Activated T-helper 2 cell treated with anti-CD3 and anti-CD28 coated beads, Interferon-gamma antibody, Interleukin-2, Interleukin-4, amounts not matched to agents 10 μg/mL and 5 μg/mL and 100 μg/mL, durations not matched to agents 14 hours and 24 hours and 36 hours (primary cell): ENCODE measurements at regions of chr7 and their contacts with region 1.

Region 1: GRCh38 chr7:23373151-23374004 is 74.2 kb downstream of the MALSU1 start:
- DNase-seq: peak; percentile 28
- H3K4me3 Mint-ChIP-seq: no peak overlapping the region
- H3K27ac Mint-ChIP-seq: peak overlapping the region; percentile 83
- H3K4me1 Mint-ChIP-seq: peaks cover 57% of the 10 kb centered on the region
- H3K27me3 Mint-ChIP-seq: no peaks in the 10 kb centered on the region

Region 2: GRCh38 chr7:23273141-23273599 is 100.2 kb before region 1 on chr7:
- intact Hi-C with region 1: no loop called
- DNase-seq: peak; percentile 84
- H3K4me3 Mint-ChIP-seq: peak overlapping the region; percentile 55
- H3K27ac Mint-ChIP-seq: peak overlapping the region; percentile 21
- H3K4me1 Mint-ChIP-seq: peaks cover 20% of the 10 kb centered on the region
- H3K27me3 Mint-ChIP-seq: peaks cover 3% of the 10 kb centered on the region

Region 3: DNA sequence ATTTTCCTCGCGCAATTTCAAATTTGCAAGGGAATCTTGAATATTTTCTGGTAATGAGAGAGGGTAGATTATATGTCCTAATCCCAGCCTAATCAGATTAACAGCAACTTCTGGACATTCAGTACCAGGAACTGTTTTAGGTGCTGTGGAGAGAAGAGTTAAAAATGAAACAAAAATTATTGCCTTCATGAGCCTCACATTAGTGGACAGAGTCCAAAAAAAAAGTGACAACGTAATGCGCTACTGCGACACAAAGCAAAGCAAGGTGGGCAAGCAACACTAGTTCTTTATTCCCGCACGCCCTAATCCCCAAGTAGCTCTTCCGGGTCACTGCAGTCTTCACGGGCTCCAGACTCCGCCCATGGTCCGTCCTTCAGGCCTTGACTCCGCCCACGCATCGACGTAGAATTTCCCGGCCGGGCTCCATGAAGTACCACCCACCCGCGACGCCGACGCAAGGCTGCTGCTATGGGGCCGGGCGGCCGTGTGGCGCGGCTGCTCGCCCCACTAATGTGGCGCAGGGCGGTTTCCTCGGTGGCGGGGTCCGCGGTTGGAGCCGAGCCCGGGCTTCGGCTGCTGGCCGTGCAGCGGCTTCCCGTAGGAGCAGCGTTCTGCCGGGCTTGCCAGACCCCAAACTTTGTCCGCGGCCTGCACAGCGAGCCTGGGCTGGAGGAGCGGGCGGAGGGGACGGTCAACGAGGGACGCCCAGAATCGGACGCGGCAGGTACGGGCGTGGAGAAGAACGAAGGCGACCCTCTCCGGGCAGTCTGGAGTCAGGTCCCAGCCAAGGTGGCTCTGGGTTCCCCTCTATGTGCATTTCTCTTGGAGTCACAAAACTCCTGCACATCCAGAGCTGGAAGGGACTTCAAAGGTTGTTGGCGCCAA is 74.3 kb before region 1 on chr7 and contains the start of gene MALSU1:
- intact Hi-C with region 1: loop called (anchors 2 kb)
- DNase-seq: peak; percentile 93
- H3K4me3 Mint-ChIP-seq: peak within 1 kb of the TSS; percentile 86
- H3K27ac Mint-ChIP-seq: peak within 1 kb of the TSS; percentile 92
- H3K4me1 Mint-ChIP-seq: peaks cover 32% of the 10 kb centered on the region
- H3K27me3 Mint-ChIP-seq: no peaks in the 10 kb centered on the region
- total RNA-seq, gene MALSU1: 83.6 and 89.0 TPM in 2 replicates

Region 4: GRCh38 chr7:23347682-23348180 is 25.6 kb before region 1 on chr7:
- intact Hi-C with region 1: loop called (anchors 2 kb)
- DNase-seq: no peak
- H3K4me3 Mint-ChIP-seq: peak overlapping the region; percentile 53
- H3K27ac Mint-ChIP-seq: peak overlapping the region; percentile 64
- H3K4me1 Mint-ChIP-seq: peaks cover 50% of the 10 kb centered on the region
- H3K27me3 Mint-ChIP-seq: no peaks in the 10 kb centered on the region

Region 5: DNA sequence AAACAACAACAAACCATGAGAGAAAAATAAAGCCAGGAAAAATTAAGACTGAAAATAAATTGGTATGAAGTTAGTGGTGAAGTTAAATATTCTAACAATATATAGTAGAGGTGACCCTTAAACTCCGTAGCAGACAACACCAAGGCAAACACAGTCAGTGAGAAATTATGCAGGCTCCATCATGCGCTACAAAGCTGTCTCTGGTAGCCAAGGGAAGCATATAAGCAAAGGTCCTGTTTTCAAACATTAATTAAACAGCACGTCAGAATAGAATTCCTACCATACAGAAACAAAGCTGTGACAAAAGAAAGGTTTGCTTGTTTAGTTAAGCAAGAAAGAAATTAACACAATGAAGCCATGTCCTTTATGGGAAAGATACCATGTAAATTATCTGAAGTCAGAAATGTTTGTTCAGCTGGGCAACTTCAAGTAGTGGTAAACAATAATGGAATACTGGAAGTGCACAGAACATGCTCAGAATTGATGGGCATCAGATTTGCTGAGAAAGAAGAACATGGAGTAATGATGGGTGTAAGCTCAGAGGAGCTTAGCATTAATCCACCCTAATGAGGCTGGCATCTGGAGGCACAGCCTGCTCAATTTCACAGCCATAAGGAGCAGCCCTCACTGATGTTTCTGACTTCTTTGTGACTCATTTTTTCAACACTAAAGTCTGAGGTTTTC is 21.3 kb after region 1 on chr7:
- intact Hi-C with region 1: loop called (anchors 1 kb)
- DNase-seq: no peak
- H3K4me3 Mint-ChIP-seq: no peak overlapping the region
- H3K27ac Mint-ChIP-seq: no peak overlapping the region
- H3K4me1 Mint-ChIP-seq: peaks cover 17% of the 10 kb centered on the region
- H3K27me3 Mint-ChIP-seq: no peaks in the 10 kb centered on the region

Region 6: DNA sequence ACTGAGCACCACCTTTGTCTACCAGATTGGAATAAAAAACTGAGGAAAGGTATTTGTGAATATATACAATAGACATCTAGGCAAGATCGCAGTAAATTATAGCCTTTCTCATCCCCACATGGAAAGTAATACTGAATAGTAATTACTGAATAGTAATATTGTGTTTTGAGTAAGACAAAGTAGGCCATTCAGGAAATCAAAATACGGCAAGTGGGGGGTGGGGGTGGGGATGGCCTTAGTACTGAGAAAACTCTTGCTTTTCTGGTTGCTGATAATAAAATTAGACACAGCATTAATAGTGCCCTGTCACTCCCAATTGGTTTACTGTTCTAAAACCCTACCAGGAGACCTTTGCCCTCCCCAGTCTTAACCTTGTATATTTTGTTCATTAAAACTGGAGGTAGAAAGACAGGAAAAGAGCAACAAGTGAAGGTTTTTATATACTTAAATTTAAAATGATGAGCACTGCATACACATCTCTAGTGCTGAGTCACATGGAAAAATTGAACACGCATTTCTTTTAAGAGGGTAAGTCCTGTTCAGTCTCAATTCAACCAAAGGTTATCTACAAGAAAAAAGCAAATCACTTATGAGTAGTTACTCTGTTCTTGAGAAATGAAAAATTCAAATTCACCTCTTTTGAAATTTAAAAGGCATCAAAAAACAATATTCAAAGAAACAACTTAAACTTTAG is 31.3 kb after region 1 on chr7:
- intact Hi-C with region 1: loop called (anchors 1 kb)
- DNase-seq: no peak
- H3K4me3 Mint-ChIP-seq: peak overlapping the region; percentile 14
- H3K27ac Mint-ChIP-seq: peak overlapping the region; percentile 91
- H3K4me1 Mint-ChIP-seq: peaks cover 22% of the 10 kb centered on the region
- H3K27me3 Mint-ChIP-seq: no peaks in the 10 kb centered on the region

Region 7: GRCh38 chr7:23531794-23532489 is 158.6 kb after region 1 on chr7 and contains the start of gene TRA2A:
- intact Hi-C with region 1: loop called (anchors 5 kb)
- DNase-seq: peak; percentile 94
- H3K4me3 Mint-ChIP-seq: peak within 1 kb of the TSS; percentile 97
- H3K27ac Mint-ChIP-seq: peak within 1 kb of the TSS; percentile 99
- H3K4me1 Mint-ChIP-seq: peaks cover 39% of the 10 kb centered on the region
- H3K27me3 Mint-ChIP-seq: no peaks in the 10 kb centered on the region
- total RNA-seq, gene TRA2A: 105 and 115 TPM in 2 replicates

Region 8: GRCh38 chr7:23893942-23894891 is 520.8 kb after region 1 on chr7:
- intact Hi-C with region 1: loop called (anchors 5 kb)
- DNase-seq: peak; percentile 52
- H3K4me3 Mint-ChIP-seq: peak overlapping the region; percentile 34
- H3K27ac Mint-ChIP-seq: peak overlapping the region; percentile 91
- H3K4me1 Mint-ChIP-seq: peaks cover 36% of the 10 kb centered on the region
- H3K27me3 Mint-ChIP-seq: peaks cover 16% of the 10 kb centered on the region